ENCODE measurements at regions of chr1 and their contacts with region 1.

Region 1: GRCh38 chr1:151888972-151889570 is 20.2 kb downstream of the THEM4 start:
- DNase-seq: no peak
- H3K4me3 Mint-ChIP-seq: no peak overlapping the region
- H3K27ac Mint-ChIP-seq: no peak overlapping the region
- H3K4me1 Mint-ChIP-seq: no peaks in the 10 kb centered on the region
- H3K27me3 Mint-ChIP-seq: no peaks in the 10 kb centered on the region
- CTCF ChIP-seq: peak; percentile 58

Region 2: GRCh38 chr1:150444232-150444631 is 1444.8 kb before region 1 on chr1:
- CTCF ChIA-PET with region 1: no interaction called
- intact Hi-C with region 1: no loop called
- DNase-seq: no peak
- H3K4me3 Mint-ChIP-seq: no peak overlapping the region
- H3K27ac Mint-ChIP-seq: no peak overlapping the region
- H3K4me1 Mint-ChIP-seq: no peaks in the 10 kb centered on the region
- H3K27me3 Mint-ChIP-seq: no peaks in the 10 kb centered on the region
- CTCF ChIP-seq: no peak

Region 3: GRCh38 chr1:151934048-151934493 is 45.0 kb after region 1 on chr1:
- CTCF ChIA-PET with region 1: interaction called, 3 read pairs
- intact Hi-C with region 1: loop called (anchors 2 kb)
- DNase-seq: peak; percentile 76
- H3K4me3 Mint-ChIP-seq: no peak overlapping the region
- H3K27ac Mint-ChIP-seq: no peak overlapping the region
- H3K4me1 Mint-ChIP-seq: peaks cover 28% of the 10 kb centered on the region
- H3K27me3 Mint-ChIP-seq: no peaks in the 10 kb centered on the region
- CTCF ChIP-seq: peak; percentile 79

Region 4: GRCh38 chr1:152013664-152014237 is 124.7 kb after region 1 on chr1:
- CTCF ChIA-PET with region 1: no interaction called
- intact Hi-C with region 1: loop called (anchors 1 kb)
- DNase-seq: peak; percentile 77
- H3K4me3 Mint-ChIP-seq: no peak overlapping the region
- H3K27ac Mint-ChIP-seq: no peak overlapping the region
- H3K4me1 Mint-ChIP-seq: peaks cover 18% of the 10 kb centered on the region
- H3K27me3 Mint-ChIP-seq: no peaks in the 10 kb centered on the region
- CTCF ChIP-seq: peak; percentile 78